PC-9 (cell line): ENCODE measurements at regions of chr10 and their contacts with region 1.

Region 1: GRCh38 chr10:11810313-11810766 is 12.8 kb upstream of the PROSER2 start:
- DNase-seq: peak; percentile 56 to 59
- H3K4me3 ChIP-seq: no peak overlapping the region
- H3K27ac ChIP-seq: no peak overlapping the region
- H3K4me1 ChIP-seq: peaks cover 23% of the 10 kb centered on the region
- H3K27me3 ChIP-seq: no peaks in the 10 kb centered on the region
- CTCF ChIP-seq: no peak

Region 2: DNA sequence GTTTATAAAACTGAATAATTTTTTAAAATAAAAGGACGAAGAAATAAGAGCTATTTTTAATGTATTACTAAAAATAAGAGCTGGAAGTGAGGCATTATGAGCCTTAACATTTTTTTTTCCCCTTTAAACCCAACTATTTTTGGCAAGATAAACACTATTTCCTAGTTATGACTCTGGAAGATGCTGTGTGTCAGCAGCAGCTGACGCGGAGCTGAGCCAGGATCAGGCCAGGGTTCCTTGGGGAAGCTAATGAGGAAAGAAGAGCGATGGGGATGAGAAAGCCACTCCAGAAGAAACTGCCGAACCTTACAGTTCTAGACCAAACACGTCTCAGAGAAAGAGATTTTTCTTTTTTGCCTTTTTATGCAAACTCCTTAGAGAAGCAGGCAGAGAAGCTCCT is 284.8 kb before region 1 on chr10:
- CTCF ChIA-PET with region 1: no interaction called
- POLR2A ChIA-PET with region 1: no interaction called
- intact Hi-C with region 1: no loop called
- DNase-seq: no peak
- H3K4me3 ChIP-seq: no peak overlapping the region
- H3K27ac ChIP-seq: no peak overlapping the region
- H3K4me1 ChIP-seq: no peaks in the 10 kb centered on the region
- H3K27me3 ChIP-seq: no peaks in the 10 kb centered on the region
- CTCF ChIP-seq: no peak

Region 3: GRCh38 chr10:11823122-11823988 is 13.0 kb after region 1 on chr10 and contains the start of gene PROSER2:
- CTCF ChIA-PET with region 1: interaction called, 12 read pairs
- POLR2A ChIA-PET with region 1: no interaction called
- intact Hi-C with region 1: no loop called
- DNase-seq: peak in 1 of 2 experiments; percentile 70
- H3K4me3 ChIP-seq: peak within 1 kb of the TSS; percentile 92
- H3K27ac ChIP-seq: peak within 1 kb of the TSS; percentile 73
- H3K4me1 ChIP-seq: peaks cover 65% of the 10 kb centered on the region
- H3K27me3 ChIP-seq: no peaks in the 10 kb centered on the region
- CTCF ChIP-seq: no peak
- total RNA-seq, gene PROSER2: 66.6 and 87.5 TPM in 2 replicates